Colonic mucosa (tissue), 4 donors: ENCODE measurements at regions of chr5 and their contacts with region 1.

Region 1: DNA sequence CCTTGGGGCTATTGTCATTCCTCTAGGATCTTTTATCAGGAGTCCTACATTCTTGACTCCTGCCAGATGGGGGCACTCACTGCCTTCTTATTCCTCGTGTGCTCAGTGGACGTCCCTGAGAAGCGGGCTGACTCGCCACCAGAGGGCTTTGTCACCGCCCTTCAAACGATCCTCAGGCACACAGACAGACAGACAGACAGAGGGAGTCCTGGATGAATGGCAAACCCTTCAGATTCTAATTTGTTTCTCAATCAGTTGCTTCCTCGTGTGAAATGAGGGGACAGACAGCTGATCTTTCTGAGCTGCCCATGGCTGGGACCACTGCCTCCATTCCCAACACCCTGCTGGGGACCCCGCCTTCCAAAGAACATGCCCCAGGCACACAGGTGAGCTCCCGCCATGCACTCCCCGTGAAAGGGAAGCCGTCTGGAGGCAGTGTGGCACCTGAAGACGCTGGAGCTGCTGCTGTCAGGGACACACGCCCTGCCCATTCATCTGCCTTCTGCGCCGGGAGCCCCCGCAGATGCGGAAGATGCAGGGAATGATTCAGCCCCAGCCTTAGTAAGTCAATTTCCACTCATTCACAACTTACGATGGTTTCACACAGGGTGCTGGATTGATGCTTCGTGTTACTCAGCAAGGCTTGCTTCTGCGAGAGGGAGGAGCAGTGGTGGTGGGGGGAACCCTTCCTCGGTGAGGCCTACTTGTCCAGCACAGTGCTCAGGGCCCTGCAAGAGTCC is 24.9 kb upstream of the SH3PXD2B start:
- DNase-seq: peak; percentile 89
- H3K4me3 ChIP-seq: no peak overlapping the region
- H3K27ac ChIP-seq: no peak overlapping the region
- H3K4me1 ChIP-seq: no peaks in the 10 kb centered on the region
- H3K27me3 ChIP-seq: no peaks in the 10 kb centered on the region
- CTCF ChIP-seq: peak; percentile 78

Region 2: GRCh38 chr5:172616730-172617129 is 137.5 kb after region 1 on chr5:
- intact Hi-C with region 1: no loop called
- DNase-seq: no peak
- H3K4me3 ChIP-seq: no peak overlapping the region
- H3K27ac ChIP-seq: no peak overlapping the region
- H3K4me1 ChIP-seq: no peaks in the 10 kb centered on the region
- H3K27me3 ChIP-seq: no peaks in the 10 kb centered on the region
- CTCF ChIP-seq: no peak

Region 3: DNA sequence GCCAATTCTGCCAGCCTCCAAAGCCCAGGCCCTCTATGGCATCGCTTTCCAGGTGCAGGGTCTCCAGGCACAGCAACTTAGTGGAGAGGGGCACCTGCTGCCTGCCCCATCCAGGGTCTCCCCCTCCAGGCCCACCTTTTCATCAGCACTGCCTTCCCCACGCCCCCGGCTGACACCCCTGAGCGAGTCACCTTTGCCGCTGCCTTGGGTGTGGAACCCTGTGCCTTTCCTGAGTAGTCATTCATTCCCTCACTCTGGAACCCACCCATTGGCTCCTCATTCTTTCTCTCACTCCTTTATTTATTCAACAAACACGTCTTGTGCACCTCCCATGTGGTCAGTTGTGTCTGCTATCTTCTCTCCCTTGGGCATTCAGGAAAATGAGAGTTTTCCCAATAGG is 465.5 kb after region 1 on chr5:
- intact Hi-C with region 1: loop called (anchors 5 kb)
- DNase-seq: no peak
- H3K4me3 ChIP-seq: no peak overlapping the region
- H3K27ac ChIP-seq: no peak overlapping the region
- H3K4me1 ChIP-seq: no peaks in the 10 kb centered on the region
- H3K27me3 ChIP-seq: no peaks in the 10 kb centered on the region
- CTCF ChIP-seq: no peak